WTC11 (cell line): ENCODE measurements at regions of chr14 and their contacts with region 1.

Region 1: DNA sequence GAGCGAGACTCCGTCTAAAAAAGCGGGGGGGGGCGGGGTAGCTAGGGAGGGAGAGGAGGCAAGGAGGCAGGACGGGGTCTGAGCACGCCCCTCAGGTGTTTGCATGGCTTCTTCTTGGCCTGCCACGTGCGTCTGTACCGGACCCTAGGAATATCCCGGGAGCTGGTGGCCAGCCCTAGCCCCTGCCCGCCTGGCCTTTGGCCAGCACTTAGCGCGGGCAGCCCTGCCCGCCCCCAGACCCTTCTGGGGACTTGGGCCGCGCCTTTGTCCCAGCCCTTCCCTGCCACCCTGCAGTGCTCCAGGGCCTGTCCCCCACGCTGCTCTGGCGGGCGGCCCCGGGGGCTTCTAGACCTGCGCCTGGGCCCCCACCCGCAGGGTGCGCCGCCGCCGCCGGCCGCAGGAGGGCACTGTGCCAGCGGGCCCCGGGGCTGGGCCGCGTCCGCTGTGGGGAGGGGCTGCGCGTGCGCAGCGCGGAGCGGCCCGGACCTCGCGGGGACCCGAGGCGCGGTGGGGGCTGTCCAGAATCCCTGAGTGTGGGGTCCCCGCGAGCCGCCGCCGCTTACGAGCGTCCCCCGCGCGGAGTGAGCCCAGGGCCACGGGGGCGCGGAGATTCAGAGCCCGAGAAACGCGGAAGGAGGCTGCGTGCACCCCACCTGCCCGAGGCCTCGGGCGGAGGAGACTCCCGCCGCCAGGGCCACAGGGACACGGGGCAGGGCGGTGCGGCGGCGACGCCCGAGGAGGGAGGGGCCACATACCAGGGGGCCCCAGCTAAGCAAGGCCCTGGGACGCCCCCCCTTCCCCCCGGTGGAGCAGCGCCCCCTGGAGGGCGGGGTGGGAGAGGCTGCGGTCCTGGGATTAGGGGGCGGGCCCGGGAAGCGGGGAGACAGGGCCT is 21.0 kb downstream of the SLC25A29 start:
- DNase-seq: peak; percentile 80
- ATAC-seq: peak; percentile 69
- H3K4me3 Mint-ChIP-seq: peak overlapping the region; percentile 64
- H3K27ac Mint-ChIP-seq: no peak overlapping the region; the same call in 1 of the 2 replicates
- H3K4me1 Mint-ChIP-seq: peaks cover 47% of the 10 kb centered on the region
- H3K27me3 Mint-ChIP-seq: no peaks in the 10 kb centered on the region
- CTCF ChIP-seq: peak; percentile 82

Region 2: DNA sequence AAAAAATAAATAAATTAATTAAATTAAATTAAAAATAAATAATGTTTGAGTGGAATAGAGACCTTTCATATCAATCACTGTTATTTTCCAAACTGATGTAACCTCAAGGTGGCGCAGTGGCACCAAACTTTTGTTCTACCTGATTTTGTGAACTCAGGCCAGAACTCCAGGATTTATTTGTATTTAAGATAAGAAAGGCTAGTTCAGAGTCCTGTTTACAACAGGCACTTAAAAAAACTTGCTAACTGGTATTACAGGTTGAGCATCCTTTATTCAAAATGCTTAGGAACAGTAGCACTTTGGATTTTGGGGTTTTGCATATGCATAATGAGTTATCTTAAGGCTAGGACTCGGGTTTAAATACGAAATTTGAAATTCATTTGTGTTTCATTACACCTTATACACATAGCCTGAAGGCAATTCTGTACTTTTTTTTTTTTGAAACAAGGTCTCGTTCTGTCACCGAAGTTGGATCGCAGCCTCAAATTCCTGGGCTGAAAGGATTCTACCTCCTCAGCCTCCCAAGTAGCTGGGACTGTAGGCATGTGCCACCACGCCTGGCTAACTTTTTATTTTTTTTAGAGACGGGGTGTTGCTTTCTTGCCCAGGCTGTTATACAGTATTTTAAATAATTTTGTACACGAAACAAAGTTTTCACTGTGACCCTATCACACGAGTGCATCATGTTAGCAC is 13.9 kb before region 1 on chr14:
- CTCF ChIA-PET with region 1: interaction called, 10 read pairs
- POLR2A ChIA-PET with region 1: no interaction called
- DNase-seq: no peak
- ATAC-seq: no peak
- H3K4me3 Mint-ChIP-seq: no peak overlapping the region
- H3K27ac Mint-ChIP-seq: no peak overlapping the region; the same call in 1 of the 2 replicates
- H3K4me1 Mint-ChIP-seq: peaks cover 54% of the 10 kb centered on the region
- H3K27me3 Mint-ChIP-seq: no peaks in the 10 kb centered on the region
- CTCF ChIP-seq: no peak

Region 3: DNA sequence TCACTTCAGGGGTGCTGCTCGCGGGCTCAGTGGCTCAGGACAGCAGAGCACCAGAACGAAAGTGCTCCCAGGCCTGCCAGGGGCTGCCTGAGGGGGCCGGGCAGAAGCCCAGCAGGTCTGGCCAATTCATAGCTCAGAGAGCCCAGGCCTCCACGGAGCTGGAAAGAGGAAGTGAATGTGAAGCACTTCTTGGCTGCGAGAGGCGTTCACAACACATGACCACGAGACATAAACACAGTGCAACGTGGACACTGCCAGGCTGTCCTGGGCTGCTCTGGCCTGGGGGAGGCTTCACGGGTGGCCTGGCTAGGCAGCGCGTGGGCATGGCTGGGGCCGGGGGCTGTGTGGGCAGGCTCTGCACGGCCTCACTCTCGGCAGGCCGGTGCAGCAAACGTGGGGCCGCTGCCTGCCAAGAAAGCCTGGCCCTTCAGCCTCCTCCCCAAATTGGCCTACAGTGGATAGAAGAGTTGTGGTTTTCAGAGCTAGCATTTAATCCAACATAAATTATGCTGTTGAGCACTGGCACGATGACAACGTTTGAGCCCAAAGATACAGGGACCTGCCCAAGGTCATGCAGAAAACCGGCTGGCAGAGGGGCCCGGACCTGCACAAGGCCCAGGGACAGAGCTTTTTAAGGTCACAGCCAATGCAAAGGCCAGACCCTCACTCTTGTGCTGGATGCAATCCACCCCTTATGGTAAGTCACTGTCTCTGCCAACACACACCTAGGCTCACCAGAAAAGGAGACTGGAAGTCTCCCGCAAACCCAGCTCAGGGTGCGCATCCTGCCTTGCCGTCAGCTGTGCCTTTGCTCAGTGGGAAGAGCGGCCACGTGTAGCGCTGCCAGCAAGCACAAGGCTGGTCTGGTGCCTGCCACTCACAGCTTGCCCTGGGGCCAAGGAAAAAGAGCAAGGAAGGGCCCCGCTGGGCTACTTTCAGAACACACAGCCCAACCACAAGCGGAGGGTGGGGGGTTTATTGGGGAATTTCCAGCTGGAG is 12.3 kb after region 1 on chr14:
- CTCF ChIA-PET with region 1: interaction called, 12 read pairs
- POLR2A ChIA-PET with region 1: interaction called, 5 read pairs
- DNase-seq: no peak
- ATAC-seq: no peak; the same call in 1 of the 2 replicates
- H3K4me3 Mint-ChIP-seq: no peak overlapping the region
- H3K27ac Mint-ChIP-seq: peak overlapping the region; percentile 22; the same call in 1 of the 2 replicates
- H3K4me1 Mint-ChIP-seq: peaks cover 1% of the 10 kb centered on the region; the same call in 1 of the 2 replicates
- H3K27me3 Mint-ChIP-seq: no peaks in the 10 kb centered on the region
- CTCF ChIP-seq: no peak

Region 4: DNA sequence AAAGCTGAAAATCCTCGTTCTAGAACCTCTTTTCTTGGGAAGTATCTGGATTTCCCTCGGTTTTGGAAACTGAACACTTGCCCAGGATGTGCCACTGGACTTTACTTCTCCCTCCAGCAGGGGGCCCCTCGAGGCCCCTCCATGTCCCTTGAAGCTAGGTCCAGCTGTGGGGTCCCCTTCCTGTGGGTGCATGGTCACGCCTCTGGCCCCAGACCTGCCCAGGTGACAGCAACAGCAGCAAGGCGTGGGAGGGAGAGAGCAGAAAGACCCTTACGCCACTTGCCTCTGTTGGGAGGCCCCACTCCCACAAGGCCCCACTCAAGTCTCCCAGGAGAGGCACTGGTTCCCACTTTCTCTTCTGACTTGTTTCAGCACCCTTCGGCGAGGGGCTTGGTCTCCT is 17.9 kb after region 1 on chr14:
- CTCF ChIA-PET with region 1: interaction called, 12 read pairs
- POLR2A ChIA-PET with region 1: no interaction called
- DNase-seq: no peak
- ATAC-seq: no peak
- H3K4me3 Mint-ChIP-seq: no peak overlapping the region
- H3K27ac Mint-ChIP-seq: no peak overlapping the region
- H3K4me1 Mint-ChIP-seq: peaks cover 29% of the 10 kb centered on the region
- H3K27me3 Mint-ChIP-seq: peaks cover 6% of the 10 kb centered on the region
- CTCF ChIP-seq: peak; percentile 59